A549 (cell line): ENCODE measurements at regions of chr9 and their contacts with region 1.

Region 1: GRCh38 chr9:72592502-72593403 is 71.3 kb downstream of the TMC1 start:
- DNase-seq: peak; percentile 38 to 78
- ATAC-seq: peak; percentile 81 to 88
- H3K4me3 ChIP-seq: no peak overlapping the region
- H3K27ac ChIP-seq: peak overlapping the region; percentile 67 to 82
- H3K4me1 ChIP-seq: peaks cover 26% of the 10 kb centered on the region
- CTCF ChIP-seq: peak; percentile 92
- EP300 ChIP-seq: no peak
- POLR2A ChIP-seq: no peak
- RAD21 ChIP-seq: peak; percentile 90 to 91

Region 2: GRCh38 chr9:72315510-72316311 is 277.0 kb before region 1 on chr9:
- CTCF ChIA-PET with region 1: interaction called, 10 read pairs
- POLR2A ChIA-PET with region 1: no interaction called
- DNase-seq: peak; percentile 40 to 91
- ATAC-seq: peak; percentile 87 to 91
- H3K4me3 ChIP-seq: peak overlapping the region; percentile 22; the same call in 2 of the 3 replicates
- H3K27ac ChIP-seq: peak overlapping the region; percentile 87 to 90
- H3K4me1 ChIP-seq: peaks cover 51% of the 10 kb centered on the region
- CTCF ChIP-seq: no peak
- EP300 ChIP-seq: peak; percentile 34 to 61; a peak in 3 of 5 replicates
- POLR2A ChIP-seq: no peak
- RAD21 ChIP-seq: no peak; a peak in 1 of 5 replicates

Region 3: DNA sequence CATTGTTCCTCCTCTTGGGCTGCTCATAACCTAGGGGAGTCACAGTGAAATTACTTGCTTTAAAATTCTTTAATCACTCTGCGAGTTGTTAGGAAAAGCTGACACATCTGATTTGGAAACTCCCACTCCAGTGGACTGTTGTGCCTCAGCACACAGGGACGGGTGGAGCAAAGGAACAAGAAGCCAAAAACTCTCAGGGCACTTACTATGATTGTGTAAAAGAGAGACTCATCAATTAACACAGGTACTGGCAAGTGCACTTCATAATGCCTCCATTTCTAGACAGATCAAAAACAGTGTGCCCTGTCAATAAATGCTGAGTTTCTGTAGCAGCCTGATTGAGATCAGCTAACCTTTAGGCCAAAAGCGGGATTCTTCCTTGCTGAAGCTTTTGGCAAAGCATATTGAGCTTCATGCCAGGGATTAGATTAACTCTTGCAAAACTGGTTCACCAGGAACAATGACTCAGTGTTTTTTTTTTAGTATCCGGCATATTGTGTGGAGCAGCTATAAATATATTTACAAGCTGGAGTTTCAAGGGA is 15.5 kb before region 1 on chr9:
- CTCF ChIA-PET with region 1: interaction called, 10 read pairs
- POLR2A ChIA-PET with region 1: interaction called, 3 read pairs
- DNase-seq: peak; percentile 52 to 83
- ATAC-seq: peak; percentile 51 to 56; a peak in 5 of 6 replicates
- H3K4me3 ChIP-seq: no peak overlapping the region
- H3K27ac ChIP-seq: peak overlapping the region; percentile 72 to 89
- H3K4me1 ChIP-seq: peaks cover 59% of the 10 kb centered on the region
- CTCF ChIP-seq: no peak
- EP300 ChIP-seq: peak; percentile 54 to 73; a peak in 3 of 5 replicates
- POLR2A ChIP-seq: no peak
- RAD21 ChIP-seq: peak in 1 of 2 experiments; percentile 55; a peak in 2 of 5 replicates

Region 4: GRCh38 chr9:73050065-73050816 is 457.5 kb after region 1 on chr9:
- CTCF ChIA-PET with region 1: no interaction called
- POLR2A ChIA-PET with region 1: interaction called, 11 read pairs
- DNase-seq: peak; percentile 47 to 82
- ATAC-seq: peak; percentile 62 to 76; a peak in 4 of 6 replicates
- H3K4me3 ChIP-seq: peak overlapping the region; percentile 10; the same call in 1 of the 3 replicates
- H3K27ac ChIP-seq: peak overlapping the region; percentile 87 to 96
- H3K4me1 ChIP-seq: peaks cover 80% of the 10 kb centered on the region
- CTCF ChIP-seq: peak; percentile 20; the same call in 1 of the 3 replicates
- EP300 ChIP-seq: no peak
- POLR2A ChIP-seq: no peak
- RAD21 ChIP-seq: 0 out of 5 replicates have a peak, but pooled peaks have one; percentile 7 to 8